Endothelial cell of umbilical vein (primary cell): ENCODE measurements at regions of chr2 and their contacts with region 1.

Region 1: DNA sequence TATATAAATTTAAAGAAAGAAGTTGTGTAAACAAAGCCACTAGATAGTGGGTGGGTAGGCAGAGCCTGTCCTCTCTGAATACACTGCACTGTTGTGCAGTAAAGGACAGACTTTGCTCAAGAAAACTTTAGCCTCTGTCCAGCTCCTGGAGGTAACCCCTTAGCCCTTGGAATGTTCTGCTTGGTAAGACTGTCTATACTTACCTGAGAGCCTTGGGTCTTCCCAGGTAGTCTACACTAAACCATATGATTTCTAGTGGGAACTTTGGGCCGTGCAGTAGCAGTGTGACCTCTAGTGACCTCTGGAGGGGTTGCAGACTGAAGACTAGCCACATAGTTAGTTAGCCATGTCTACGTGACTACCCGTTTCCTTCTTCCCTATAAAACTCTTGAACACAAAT is 678.3 kb upstream of the NRXN1 start:
- DNase-seq: no peak
- H3K4me3 ChIP-seq: no peak overlapping the region
- H3K27ac ChIP-seq: no peak overlapping the region
- H3K4me1 ChIP-seq: no peaks in the 10 kb centered on the region
- H3K27me3 ChIP-seq: no peaks in the 10 kb centered on the region
- CTCF ChIP-seq: peak in 1 of 2 donors; percentile 19
- POLR2A ChIP-seq: no peak

Region 2: DNA sequence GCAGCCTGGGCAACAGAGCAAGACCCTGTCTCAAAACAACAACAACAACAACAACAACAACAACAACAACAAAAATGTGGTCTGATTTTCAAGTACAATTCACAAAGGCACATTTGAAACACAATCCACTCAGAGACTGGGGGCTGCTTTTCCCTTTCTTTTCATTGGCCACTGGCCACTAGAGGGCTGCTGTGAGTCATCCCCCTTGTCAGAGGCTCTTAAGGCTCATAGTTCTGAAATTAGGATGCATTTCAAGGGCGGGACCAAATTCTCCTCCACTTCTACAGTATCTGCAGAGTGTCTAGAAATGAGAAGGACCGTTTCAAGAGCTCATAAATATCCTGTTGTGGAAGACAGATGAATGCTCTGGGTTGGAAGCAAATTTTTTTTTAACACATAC is 963.7 kb before region 1 on chr2:
- CTCF ChIA-PET with region 1: no interaction called
- POLR2A ChIA-PET with region 1: no interaction called
- dilution Hi-C with region 1: no loop called
- intact Hi-C with region 1: loop called (anchors 1 kb)
- DNase-seq: peak; percentile 18
- H3K4me3 ChIP-seq: no peak overlapping the region
- H3K27ac ChIP-seq: no peak overlapping the region
- H3K4me1 ChIP-seq: no peaks in the 10 kb centered on the region
- H3K27me3 ChIP-seq: no peaks in the 10 kb centered on the region
- CTCF ChIP-seq: peak; percentile 48 to 49
- POLR2A ChIP-seq: no peak

Region 3: GRCh38 chr2:52054857-52055256 is 344.6 kb after region 1 on chr2:
- CTCF ChIA-PET with region 1: no interaction called
- POLR2A ChIA-PET with region 1: no interaction called
- dilution Hi-C with region 1: no loop called
- intact Hi-C with region 1: no loop called
- DNase-seq: no peak
- H3K4me3 ChIP-seq: no peak overlapping the region
- H3K27ac ChIP-seq: no peak overlapping the region
- H3K4me1 ChIP-seq: no peaks in the 10 kb centered on the region
- H3K27me3 ChIP-seq: no peaks in the 10 kb centered on the region
- CTCF ChIP-seq: no peak
- POLR2A ChIP-seq: no peak